AG04450 (cell line): ENCODE measurements at regions of chr6 and their contacts with region 1.

Region 1: DNA sequence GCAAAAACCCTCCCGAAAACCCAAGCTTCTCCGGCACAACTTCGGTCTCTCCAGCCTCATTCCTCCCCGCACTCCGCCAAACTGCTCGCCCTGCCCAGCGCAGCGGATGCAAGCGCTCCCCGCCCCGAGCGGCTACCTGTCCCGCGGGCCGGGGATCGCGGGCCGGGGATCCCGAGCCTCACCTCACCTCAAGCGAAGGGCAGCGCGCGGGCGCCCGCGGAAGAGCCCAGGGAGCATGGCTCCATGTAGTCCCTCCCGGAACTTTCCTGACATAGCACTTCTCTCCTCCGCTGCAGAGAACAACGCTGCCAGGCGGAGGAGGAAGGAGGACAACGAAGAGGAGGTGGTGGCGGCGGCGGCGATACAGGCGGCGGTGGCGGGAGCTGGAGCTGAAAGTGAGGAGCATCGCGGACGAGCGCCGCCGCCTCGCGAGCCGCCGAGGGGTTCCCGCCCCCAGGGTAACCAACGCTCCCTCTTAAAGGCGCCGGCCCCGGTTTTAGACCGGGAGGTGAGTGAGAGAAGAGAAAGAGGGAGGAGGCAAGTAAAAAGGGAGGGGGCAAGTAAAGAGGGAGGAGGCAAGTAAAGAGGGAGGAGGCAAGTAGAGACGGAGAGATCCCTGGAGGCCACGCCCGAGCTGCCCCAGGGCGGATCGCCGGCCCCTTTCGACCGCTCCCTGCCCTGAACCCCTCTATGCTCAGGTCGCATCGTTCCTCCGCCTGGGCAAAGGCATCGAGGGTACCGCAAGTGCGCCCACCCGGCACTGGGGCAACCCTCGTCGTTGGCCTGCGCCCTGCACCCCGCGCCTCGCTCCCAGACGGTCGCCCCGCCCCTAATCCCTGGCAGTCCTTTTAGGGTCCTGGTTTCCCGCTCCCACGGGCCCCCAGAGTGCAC is at the start of gene GPR63:
- DNase-seq: peak; percentile 15
- H3K4me3 ChIP-seq: peak within 1 kb of the TSS; percentile 78
- H3K27ac ChIP-seq: no peak within 1 kb of the TSS
- H3K27me3 ChIP-seq: peaks cover 9% of the 10 kb centered on the region
- CTCF ChIP-seq: no peak
- polyA plus RNA-seq, gene GPR63: 1.4 and 1.6 TPM in 2 replicates

Region 2: GRCh38 chr6:96433950-96434349 is 403.4 kb before region 1 on chr6:
- CTCF ChIA-PET with region 1: no interaction called
- POLR2A ChIA-PET with region 1: no interaction called
- DNase-seq: no peak
- H3K4me3 ChIP-seq: no peak overlapping the region
- H3K27ac ChIP-seq: no peak overlapping the region
- H3K27me3 ChIP-seq: no peaks in the 10 kb centered on the region
- CTCF ChIP-seq: no peak

Region 3: DNA sequence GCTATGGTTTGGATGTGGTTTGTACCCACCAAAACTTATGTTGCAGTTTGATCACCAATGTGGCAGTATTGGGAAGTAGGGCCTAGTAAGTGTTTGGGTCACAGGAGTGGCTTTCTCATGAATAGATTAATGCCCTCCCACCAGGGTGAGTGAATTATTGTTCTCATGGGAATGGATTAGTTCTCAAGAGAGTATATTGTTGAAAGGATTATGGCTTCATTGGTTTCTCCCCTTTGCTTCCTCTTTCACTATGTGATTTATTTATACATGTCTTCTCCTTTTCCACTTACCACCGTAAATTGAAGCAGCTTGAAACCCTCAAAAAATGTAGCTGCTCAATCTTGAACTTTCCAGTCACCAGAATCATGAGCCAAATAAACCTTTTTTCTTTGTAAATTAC is 304.9 kb before region 1 on chr6:
- CTCF ChIA-PET with region 1: interaction called, 10 read pairs
- POLR2A ChIA-PET with region 1: no interaction called
- DNase-seq: no peak
- H3K4me3 ChIP-seq: no peak overlapping the region
- H3K27ac ChIP-seq: no peak overlapping the region
- H3K27me3 ChIP-seq: no peaks in the 10 kb centered on the region
- CTCF ChIP-seq: no peak